Activated CD4-positive, alpha-beta memory T cell treated with anti-CD3 and anti-CD28 coated beads for 36 hours (primary cell): ENCODE measurements at regions of chr5 and their contacts with region 1.

Region 1: DNA sequence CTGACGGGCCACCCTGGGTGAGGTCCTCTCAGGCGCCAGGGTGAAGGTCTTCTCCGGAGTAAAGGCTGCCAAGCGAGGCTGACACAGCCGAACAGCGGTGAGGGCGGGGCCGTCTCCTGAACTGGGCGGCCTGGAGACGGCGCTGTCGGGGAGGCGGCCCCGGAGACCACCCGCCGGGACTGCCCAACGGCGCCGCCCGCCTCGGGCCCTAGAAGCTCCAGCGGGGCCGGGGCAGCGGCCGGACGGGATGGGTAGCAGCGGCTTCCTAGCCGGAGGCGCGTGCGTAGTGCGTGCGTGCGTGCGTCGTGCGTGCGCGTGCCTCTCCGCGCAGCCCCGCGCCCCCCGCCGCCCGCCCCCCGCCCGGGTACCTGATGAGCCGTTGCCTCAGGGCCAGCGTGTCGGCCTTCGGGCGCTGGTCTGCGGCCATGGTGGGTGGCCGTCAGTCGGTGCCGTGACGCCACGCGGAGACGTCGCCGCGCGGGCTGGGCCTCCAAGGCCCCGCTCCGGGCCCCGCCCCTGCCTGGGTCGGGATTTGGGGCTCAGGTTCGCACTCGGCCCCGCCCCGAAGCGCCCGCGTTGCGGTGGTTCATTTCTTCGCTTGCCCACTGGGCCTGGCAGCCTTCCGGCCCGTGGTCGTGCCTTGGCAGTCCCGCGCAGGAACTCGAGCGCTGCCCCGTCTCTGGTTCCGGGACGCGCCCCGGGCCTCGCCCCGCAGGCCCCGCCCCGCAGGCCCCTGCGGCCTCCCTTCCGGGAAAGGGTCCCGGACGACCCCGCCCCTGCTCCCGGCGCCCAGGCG is at the start of gene PHYKPL:
- DNase-seq: peak; percentile 77
- H3K4me3 Mint-ChIP-seq: peak within 1 kb of the TSS; percentile 84
- H3K27ac Mint-ChIP-seq: peak within 1 kb of the TSS; percentile 83
- H3K4me1 Mint-ChIP-seq: peaks cover 49% of the 10 kb centered on the region
- H3K27me3 Mint-ChIP-seq: no peaks in the 10 kb centered on the region
- total RNA-seq, gene PHYKPL: 49.3 to 58.0 TPM

Region 2: DNA sequence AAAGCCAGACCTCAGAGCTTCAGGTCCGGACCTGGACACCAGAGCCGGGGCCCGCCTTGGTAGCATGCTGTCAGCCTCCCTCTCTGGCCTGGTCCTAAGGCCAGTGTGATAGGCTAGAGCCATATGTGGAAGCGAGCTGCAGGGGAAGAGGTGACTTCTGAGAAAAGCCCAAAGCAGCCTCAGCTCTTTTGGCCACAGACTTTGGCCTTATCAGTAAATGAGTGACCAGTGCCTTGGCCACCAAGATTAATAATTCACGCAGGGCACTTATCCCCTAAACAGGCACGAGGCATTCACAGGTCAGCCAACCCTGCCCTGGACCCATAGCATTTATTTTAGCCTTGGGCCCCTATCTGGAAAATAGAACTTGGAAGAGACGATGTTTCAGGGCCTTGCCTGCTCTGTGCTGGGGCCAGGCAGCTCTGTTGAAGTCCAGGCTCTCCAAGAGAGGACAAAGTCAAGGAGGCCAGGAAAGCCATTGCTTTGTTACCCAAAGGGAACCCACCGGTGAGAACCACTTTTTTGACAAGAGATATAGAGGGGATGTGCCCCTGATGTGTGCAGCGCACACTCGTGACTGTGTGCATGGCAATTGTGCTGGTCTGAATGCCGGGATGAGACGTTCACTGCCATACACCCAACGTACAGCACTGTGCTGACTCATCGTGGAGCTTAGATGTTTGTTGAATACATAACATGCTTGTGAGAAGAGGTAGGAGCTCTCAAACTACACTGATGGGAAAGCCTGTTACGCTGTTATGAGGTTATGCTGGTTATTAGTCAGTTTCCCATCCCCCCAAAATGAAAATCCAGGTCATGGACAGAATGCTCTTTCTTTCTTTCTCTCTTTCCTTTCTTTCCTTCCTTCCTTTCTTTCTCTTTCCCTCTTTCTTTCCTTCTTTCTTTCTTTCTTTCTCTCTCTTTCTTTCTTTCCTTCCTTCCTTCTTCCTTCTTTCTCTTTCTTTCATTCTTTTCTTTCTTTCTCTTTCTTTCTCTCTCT is 853.1 kb before region 1 on chr5:
- CTCF ChIA-PET with region 1: no interaction called
- POLR2A ChIA-PET with region 1: no interaction called
- intact Hi-C with region 1: no loop called
- DNase-seq: peak; percentile 67
- H3K4me3 Mint-ChIP-seq: no peak overlapping the region
- H3K27ac Mint-ChIP-seq: peak overlapping the region; percentile 36
- H3K4me1 Mint-ChIP-seq: peaks cover 20% of the 10 kb centered on the region
- H3K27me3 Mint-ChIP-seq: no peaks in the 10 kb centered on the region

Region 3: GRCh38 chr5:178551059-178551458 is 318.7 kb after region 1 on chr5:
- CTCF ChIA-PET with region 1: no interaction called
- POLR2A ChIA-PET with region 1: no interaction called
- intact Hi-C with region 1: loop called (anchors 10 kb)
- DNase-seq: no peak
- H3K4me3 Mint-ChIP-seq: no peak overlapping the region
- H3K27ac Mint-ChIP-seq: no peak overlapping the region
- H3K4me1 Mint-ChIP-seq: no peaks in the 10 kb centered on the region
- H3K27me3 Mint-ChIP-seq: peaks cover 11% of the 10 kb centered on the region

Region 4: GRCh38 chr5:178590141-178590923 is 358.0 kb after region 1 on chr5 and contains the start of gene COL23A1:
- CTCF ChIA-PET with region 1: no interaction called
- POLR2A ChIA-PET with region 1: no interaction called
- intact Hi-C with region 1: loop called (anchors 5 kb)
- DNase-seq: peak; percentile 49
- H3K4me3 Mint-ChIP-seq: peak within 1 kb of the TSS; percentile 37
- H3K27ac Mint-ChIP-seq: no peak within 1 kb of the TSS
- H3K4me1 Mint-ChIP-seq: peaks cover 5% of the 10 kb centered on the region
- H3K27me3 Mint-ChIP-seq: peaks cover 41% of the 10 kb centered on the region
- total RNA-seq, gene COL23A1: 0.15 TPM in 1 of 2 experiments, not detected in the other